Activated T-helper 2 cell treated with anti-CD3 and anti-CD28 coated beads, Interferon-gamma antibody, Interleukin-2, Interleukin-4, amounts not matched to agents 10 μg/mL and 5 μg/mL and 100 μg/mL, durations not matched to agents 14 hours and 24 hours and 36 hours (primary cell): ENCODE measurements at regions of chr10 and their contacts with region 1.

Region 1: DNA sequence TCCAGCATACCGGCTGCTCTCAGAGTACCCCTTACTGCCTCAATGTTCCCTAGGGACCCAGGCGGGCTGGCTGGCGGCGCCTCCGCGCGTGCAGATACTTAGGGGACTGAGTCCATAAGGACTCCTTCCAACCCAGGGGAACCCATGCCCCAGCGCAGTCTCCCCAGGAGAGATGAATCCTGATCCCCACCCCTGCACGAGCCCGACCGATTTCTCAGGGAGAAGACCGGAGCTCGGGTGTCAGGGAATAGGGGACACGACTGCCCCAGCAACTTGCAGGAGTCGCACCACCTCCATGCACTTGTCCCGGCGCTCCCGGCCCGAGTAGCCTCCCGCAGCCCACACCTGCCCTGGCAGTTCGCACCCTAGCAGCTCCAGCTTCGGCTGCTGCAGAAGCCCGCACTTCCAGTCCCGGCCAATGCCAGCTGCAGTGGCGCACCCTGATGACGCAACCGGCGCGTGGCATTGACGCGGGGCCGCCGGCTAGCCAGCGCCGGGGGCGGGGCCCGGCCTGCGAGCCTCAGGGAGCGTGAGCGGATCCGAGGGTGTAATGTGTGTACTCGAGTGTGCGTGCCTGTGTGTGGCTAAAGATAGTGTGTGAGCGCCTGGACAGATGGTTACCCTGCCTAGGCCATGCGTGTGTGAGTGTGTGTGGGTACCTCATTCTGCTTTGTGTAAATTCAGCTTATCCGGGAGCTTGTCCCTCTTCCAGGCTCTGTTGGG is at the start of gene GPAM:
- DNase-seq: peak; percentile 96
- H3K4me3 Mint-ChIP-seq: peak within 1 kb of the TSS; percentile 88
- H3K27ac Mint-ChIP-seq: peak within 1 kb of the TSS; percentile 91
- H3K4me1 Mint-ChIP-seq: peaks cover 29% of the 10 kb centered on the region
- H3K27me3 Mint-ChIP-seq: peaks cover 5% of the 10 kb centered on the region
- total RNA-seq, gene GPAM: 7.3 and 7.7 TPM in 2 replicates

Region 2: GRCh38 chr10:112140110-112140970 is 43.1 kb before region 1 on chr10:
- intact Hi-C with region 1: loop called (anchors 2 kb)
- DNase-seq: peak; percentile 65
- H3K4me3 Mint-ChIP-seq: no peak overlapping the region
- H3K27ac Mint-ChIP-seq: no peak overlapping the region
- H3K4me1 Mint-ChIP-seq: no peaks in the 10 kb centered on the region
- H3K27me3 Mint-ChIP-seq: peaks cover 2% of the 10 kb centered on the region

Region 3: DNA sequence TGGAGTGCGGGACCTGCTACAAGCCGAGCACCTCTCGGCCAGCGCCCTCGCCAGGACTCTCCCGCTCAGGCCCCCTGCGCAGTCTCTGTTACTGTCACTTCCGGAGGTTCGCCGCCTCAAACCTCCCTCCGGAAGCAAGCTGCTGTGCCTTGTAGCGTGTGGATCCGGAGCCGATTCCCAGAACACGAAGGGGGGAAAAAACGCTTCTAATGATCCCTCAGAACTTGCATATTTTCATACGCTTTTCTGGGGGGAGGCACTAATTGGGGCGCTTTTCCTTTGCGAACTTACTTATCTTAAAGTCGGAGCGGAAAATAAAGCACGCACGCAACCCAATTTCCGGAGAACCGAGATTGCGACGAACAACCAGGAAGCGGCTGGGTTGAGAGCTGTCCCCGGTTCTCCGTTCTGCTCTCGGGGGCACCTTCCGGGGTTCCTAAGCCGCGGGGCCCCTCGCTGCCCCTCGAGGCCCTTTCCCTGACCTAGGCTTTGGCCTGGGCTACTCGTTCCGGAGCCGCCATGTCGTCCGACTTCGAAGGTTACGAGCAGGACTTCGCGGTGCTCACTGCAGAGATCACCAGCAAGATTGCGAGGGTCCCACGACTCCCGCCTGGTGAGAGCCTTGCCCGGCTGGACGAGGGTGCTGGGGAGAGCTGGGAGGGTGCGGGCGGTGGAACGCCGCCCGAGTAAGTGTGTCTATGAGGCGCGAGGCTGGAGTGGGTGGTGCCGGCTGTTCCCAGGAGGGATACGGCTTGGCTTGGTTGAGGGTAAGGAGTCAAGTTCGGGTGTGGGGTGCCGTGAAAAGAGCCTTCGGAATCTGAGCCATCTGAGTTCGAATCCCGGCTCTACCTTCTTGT is 263.6 kb after region 1 on chr10 and contains the starts of genes VTI1A and ZDHHC6:
- intact Hi-C with region 1: loop called (anchors 5 kb)
- DNase-seq: peak; percentile 80
- H3K4me3 Mint-ChIP-seq: peak within 1 kb of the TSS; percentile 97
- H3K27ac Mint-ChIP-seq: peak within 1 kb of the TSS; percentile 93
- H3K4me1 Mint-ChIP-seq: peaks cover 39% of the 10 kb centered on the region
- H3K27me3 Mint-ChIP-seq: no peaks in the 10 kb centered on the region
- total RNA-seq, gene VTI1A: 33.6 and 39.5 TPM in 2 replicates
- total RNA-seq, gene ZDHHC6: 42.9 and 43.2 TPM in 2 replicates

Region 4: GRCh38 chr10:112475575-112476218 is 292.2 kb after region 1 on chr10:
- intact Hi-C with region 1: no loop called
- DNase-seq: no peak
- H3K4me3 Mint-ChIP-seq: no peak overlapping the region
- H3K27ac Mint-ChIP-seq: no peak overlapping the region
- H3K4me1 Mint-ChIP-seq: peaks cover 4% of the 10 kb centered on the region
- H3K27me3 Mint-ChIP-seq: no peaks in the 10 kb centered on the region